Activated CD8-positive, alpha-beta memory T cell treated with anti-CD3 and anti-CD28 coated beads, Interleukin-2, amount 10 ng/mL, durations not matched to agents 7 days and 5 days (primary cell): ENCODE measurements at regions of chr11 and their contacts with region 1.

Region 1: DNA sequence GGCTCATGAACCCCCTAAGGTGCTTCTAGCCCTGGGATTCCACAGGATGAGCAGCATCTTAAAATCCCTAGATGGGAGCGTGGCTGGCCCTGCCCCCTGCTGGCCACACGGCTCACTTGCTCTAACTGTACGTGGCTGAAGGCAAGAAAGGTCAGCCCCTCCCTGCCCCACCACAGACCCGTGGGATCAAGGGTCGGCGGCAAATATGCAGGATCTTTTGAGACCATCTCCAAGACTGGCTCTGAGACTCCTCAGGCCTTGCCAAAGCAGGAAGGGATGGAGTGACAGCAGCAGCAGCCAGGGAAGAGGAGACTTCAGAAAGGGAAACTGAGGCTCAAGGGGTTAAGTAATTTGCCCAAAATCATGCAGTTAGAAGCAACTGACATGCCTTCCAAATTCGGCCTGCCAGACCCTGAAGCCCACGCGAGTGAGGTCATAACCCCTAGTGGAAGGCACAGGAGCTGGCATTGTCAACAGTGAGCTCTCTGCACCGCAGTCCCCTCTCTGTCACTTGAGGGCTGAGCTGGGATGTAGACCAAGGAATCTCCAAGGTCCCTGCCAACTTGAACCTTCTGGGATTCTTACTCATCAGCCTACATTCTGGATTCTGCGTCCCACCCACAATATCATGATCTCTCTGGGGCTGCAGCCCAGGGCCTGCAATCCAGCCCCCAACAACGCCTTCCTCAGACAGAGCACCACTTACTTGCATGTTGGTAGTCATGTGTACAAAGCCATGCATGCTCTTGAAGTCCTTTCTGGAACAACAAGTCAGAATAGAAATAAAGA is 31.4 kb downstream of the CREB3L1 start:
- DNase-seq: peak; percentile 80
- ATAC-seq: peak; percentile 85
- H3K4me3 Mint-ChIP-seq: no peak overlapping the region
- H3K27ac Mint-ChIP-seq: no peak overlapping the region
- H3K4me1 Mint-ChIP-seq: peaks cover 9% of the 10 kb centered on the region
- H3K27me3 Mint-ChIP-seq: peaks cover 5% of the 10 kb centered on the region

Region 2: DNA sequence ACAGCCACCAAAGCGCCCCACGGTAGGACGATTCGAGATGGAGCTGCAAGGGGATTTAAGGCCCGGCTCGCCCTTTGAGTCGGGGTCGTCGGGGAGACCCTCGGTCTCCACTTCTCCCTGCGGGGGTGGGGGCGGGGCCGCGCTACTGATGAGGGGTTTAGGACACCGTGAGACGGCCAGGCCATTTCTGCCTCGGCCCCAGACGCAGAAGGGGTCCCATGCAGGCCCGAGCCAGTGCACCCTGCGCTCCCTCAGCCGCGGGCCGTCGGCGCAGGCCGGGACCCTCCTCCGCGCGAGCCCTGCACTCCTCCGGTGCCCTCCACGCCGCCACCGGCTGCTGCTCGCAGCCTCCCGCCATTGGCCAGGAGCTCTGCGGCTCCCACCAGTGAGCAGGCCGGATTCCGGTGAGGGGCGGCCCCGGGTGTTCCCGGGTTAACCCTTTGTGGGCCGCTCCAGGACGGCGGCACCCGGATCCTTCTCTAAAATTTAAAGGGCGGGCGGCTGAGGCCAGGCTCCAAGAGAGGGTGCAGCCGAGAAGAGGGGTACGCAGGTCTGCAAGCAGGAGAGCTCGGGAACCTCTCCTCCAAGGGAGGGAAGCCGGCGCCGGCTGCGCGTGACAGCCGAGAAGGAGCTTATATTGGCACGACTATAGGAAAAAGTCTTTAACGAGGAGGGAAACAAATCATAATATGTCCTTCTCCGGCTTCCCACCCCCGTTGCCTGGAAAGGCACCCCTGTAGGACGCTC is 13.3 kb before region 1 on chr11:
- CTCF ChIA-PET with region 1: interaction called, 23 read pairs
- DNase-seq: peak; percentile 74
- ATAC-seq: peak; percentile 98
- H3K4me3 Mint-ChIP-seq: peak overlapping the region; percentile 51
- H3K27ac Mint-ChIP-seq: no peak overlapping the region
- H3K4me1 Mint-ChIP-seq: peaks cover 21% of the 10 kb centered on the region
- H3K27me3 Mint-ChIP-seq: peaks cover 40% of the 10 kb centered on the region